ENCODE measurements at regions of chr1 and their contacts with region 1.

Region 1: GRCh38 chr1:12386130-12386529 is 156.3 kb downstream of the VPS13D start:
- DNase-seq: peak in 7 of 9 donors; percentile 23 to 55 (median 42)
- ATAC-seq: peak; percentile 95
- H3K4me3 ChIP-seq: peak overlapping the region; percentile 2
- H3K4me3 Mint-ChIP-seq: peak overlapping the region; percentile 30 to 81 (median 64)
- H3K27ac ChIP-seq: peak overlapping the region; percentile 52
- H3K27ac Mint-ChIP-seq: peak overlapping the region; percentile 61 to 96 (median 80)
- H3K4me1 ChIP-seq: peaks cover 31 to 40% of the 10 kb centered on the region in 2 donors
- H3K4me1 Mint-ChIP-seq: peaks cover 32 to 61% (median 52%) of the 10 kb centered on the region in 7 donors
- H3K27me3 ChIP-seq: no peaks in the 10 kb centered on the region
- H3K27me3 Mint-ChIP-seq: no peaks in the 10 kb centered on the region

Region 2: DNA sequence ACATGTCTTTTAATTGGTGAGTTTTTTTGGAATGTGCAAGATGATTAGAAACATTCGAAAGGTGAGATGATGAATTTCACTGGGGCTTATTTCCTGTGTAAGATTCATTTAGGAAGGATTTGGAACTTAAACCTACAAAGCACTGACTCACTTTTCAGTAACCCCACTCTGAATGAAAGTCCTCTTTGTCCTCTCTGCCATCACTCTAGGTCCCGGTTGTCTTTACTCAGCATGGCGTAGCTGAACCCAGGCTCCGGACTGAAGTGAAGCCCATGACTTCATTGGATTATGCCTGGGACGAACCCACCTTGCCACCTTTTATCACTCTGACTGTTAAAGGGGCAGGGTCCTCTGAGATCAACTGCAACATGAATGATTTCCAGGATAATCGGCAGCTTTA is 16.9 kb before region 1 on chr1:
- CTCF ChIA-PET with region 1: no interaction called
- POLR2A ChIA-PET with region 1: no interaction called
- intact Hi-C with region 1: loop called in 1 of 2 experiments (anchors 2 kb)
- DNase-seq: no peak
- ATAC-seq: no peak
- H3K4me3 ChIP-seq: no peak overlapping the region
- H3K4me3 Mint-ChIP-seq: no peak overlapping the region
- H3K27ac ChIP-seq: no peak overlapping the region
- H3K27ac Mint-ChIP-seq: no peak overlapping the region
- H3K4me1 ChIP-seq: no peaks in the 10 kb centered on the region
- H3K4me1 Mint-ChIP-seq: peaks cover 0 to 4% (median 0%) of the 10 kb centered on the region in 7 donors
- H3K27me3 ChIP-seq: no peaks in the 10 kb centered on the region
- H3K27me3 Mint-ChIP-seq: no peaks in the 10 kb centered on the region

Region 3: DNA sequence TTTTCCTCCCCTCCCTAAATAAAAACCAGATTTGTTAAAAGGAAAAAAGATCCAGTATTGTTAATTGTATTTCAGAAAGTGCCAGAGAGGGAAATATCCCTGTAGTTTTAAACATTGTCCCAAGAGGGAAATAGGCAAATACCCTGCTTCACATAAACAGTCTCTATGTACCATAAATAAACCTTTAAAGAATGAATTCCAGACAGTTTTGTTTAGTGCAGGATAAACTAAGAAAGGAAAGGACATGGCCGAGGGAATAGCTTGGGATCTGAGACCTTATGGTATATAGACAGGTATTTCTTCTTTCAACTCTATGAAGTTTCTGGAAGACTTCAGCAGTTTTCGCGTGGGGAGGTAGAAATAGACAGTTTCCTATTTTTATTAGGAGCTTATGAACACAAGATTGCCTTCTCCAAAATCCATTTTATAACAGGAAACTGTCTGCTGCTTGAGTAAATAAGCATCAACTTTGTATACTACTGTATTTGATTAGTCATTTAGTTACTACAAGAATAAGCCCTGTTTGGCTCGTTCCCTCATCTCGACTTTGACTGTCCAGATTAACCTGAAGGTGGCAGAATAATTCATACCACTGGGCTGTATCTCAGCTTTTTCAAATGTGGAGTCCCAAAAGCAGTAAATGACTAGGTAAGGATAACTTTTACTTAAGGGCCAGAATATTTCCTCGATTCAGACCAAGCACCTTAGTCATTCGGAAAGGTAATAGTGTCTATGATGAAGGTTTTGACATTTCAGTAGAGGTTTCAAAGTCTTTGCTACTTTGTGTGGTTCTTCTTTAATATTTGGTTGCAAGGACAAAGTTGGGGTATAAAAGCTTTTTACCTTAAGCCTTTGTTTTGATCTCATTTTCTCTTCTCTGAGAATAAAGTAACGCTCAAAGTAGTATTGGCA is 21.2 kb after region 1 on chr1:
- CTCF ChIA-PET with region 1: no interaction called
- POLR2A ChIA-PET with region 1: interaction called, 3 read pairs
- intact Hi-C with region 1: loop called in 1 of 2 experiments (anchors 2 kb)
- DNase-seq: peak in 5 of 9 donors; percentile 20 to 45 (median 43)
- ATAC-seq: peak; percentile 49
- H3K4me3 ChIP-seq: no peak overlapping the region
- H3K4me3 Mint-ChIP-seq: no peak overlapping the region
- H3K27ac ChIP-seq: no peak overlapping the region
- H3K27ac Mint-ChIP-seq: peak overlapping the region in 2 of 9 donors; percentile 59 to 61
- H3K4me1 ChIP-seq: peaks cover 0 to 11% of the 10 kb centered on the region in 2 donors
- H3K4me1 Mint-ChIP-seq: peaks cover 10 to 57% (median 47%) of the 10 kb centered on the region in 7 donors
- H3K27me3 ChIP-seq: no peaks in the 10 kb centered on the region
- H3K27me3 Mint-ChIP-seq: no peaks in the 10 kb centered on the region

Region 4: GRCh38 chr1:12434174-12434573 is 48.0 kb after region 1 on chr1:
- CTCF ChIA-PET with region 1: no interaction called
- POLR2A ChIA-PET with region 1: interaction called, 3 read pairs
- intact Hi-C with region 1: loop called in 1 of 2 experiments (anchors 5 kb)
- DNase-seq: peak in 6 of 9 donors; percentile 32 to 70 (median 46)
- ATAC-seq: peak; percentile 79
- H3K4me3 ChIP-seq: peak overlapping the region; percentile 44
- H3K4me3 Mint-ChIP-seq: peak overlapping the region; percentile 54 to 76 (median 70)
- H3K27ac ChIP-seq: peak overlapping the region; percentile 58
- H3K27ac Mint-ChIP-seq: peak overlapping the region; percentile 69 to 92 (median 84)
- H3K4me1 ChIP-seq: peaks cover 52 to 56% of the 10 kb centered on the region in 2 donors
- H3K4me1 Mint-ChIP-seq: peaks cover 46 to 85% (median 71%) of the 10 kb centered on the region in 7 donors
- H3K27me3 ChIP-seq: no peaks in the 10 kb centered on the region
- H3K27me3 Mint-ChIP-seq: no peaks in the 10 kb centered on the region

Region 5: GRCh38 chr1:12477936-12478611 is 91.9 kb after region 1 on chr1:
- CTCF ChIA-PET with region 1: interaction called, 3 read pairs
- POLR2A ChIA-PET with region 1: interaction called, 8 read pairs
- intact Hi-C with region 1: loop called in 1 of 2 experiments (anchors 2 kb)
- DNase-seq: peak in 1 of 9 donors; percentile 27
- ATAC-seq: peak; percentile 19
- H3K4me3 ChIP-seq: peak overlapping the region; percentile 42
- H3K4me3 Mint-ChIP-seq: peak overlapping the region; percentile 71 to 86 (median 78)
- H3K27ac ChIP-seq: peak overlapping the region; percentile 66
- H3K27ac Mint-ChIP-seq: peak overlapping the region; percentile 89 to 99 (median 96)
- H3K4me1 ChIP-seq: peaks cover 64 to 89% of the 10 kb centered on the region in 2 donors
- H3K4me1 Mint-ChIP-seq: peaks cover 58 to 97% (median 94%) of the 10 kb centered on the region in 7 donors
- H3K27me3 ChIP-seq: no peaks in the 10 kb centered on the region
- H3K27me3 Mint-ChIP-seq: no peaks in the 10 kb centered on the region

Measured in naive thymus-derived CD4-positive, alpha-beta T cell (primary cell).